Heart right ventricle (tissue), 16 donors: ENCODE measurements at regions of chr13 and their contacts with region 1.

Region 1: GRCh38 chr13:105219651-105220050 is 1315.8 kb downstream of the EFNB2 start:
- DNase-seq: no peak
- ATAC-seq: no peak
- H3K4me3 ChIP-seq: no peak overlapping the region
- H3K27ac ChIP-seq: no peak overlapping the region
- H3K4me1 ChIP-seq: no peaks in the 10 kb centered on the region
- H3K27me3 ChIP-seq: no peaks in the 10 kb centered on the region
- CTCF ChIP-seq: no peak

Region 2: GRCh38 chr13:104975272-104975671 is 244.4 kb before region 1 on chr13:
- intact Hi-C with region 1: loop called in 1 of 10 experiments (anchors 10 kb)
- DNase-seq: no peak
- ATAC-seq: no peak
- H3K4me3 ChIP-seq: no peak overlapping the region
- H3K27ac ChIP-seq: no peak overlapping the region
- H3K4me1 ChIP-seq: no peaks in the 10 kb centered on the region
- H3K27me3 ChIP-seq: no peaks in the 10 kb centered on the region
- CTCF ChIP-seq: no peak

Region 3: GRCh38 chr13:105327581-105328126 is 108.0 kb after region 1 on chr13:
- intact Hi-C with region 1: no loop called
- DNase-seq: no peak
- ATAC-seq: no peak
- H3K4me3 ChIP-seq: no peak overlapping the region
- H3K27ac ChIP-seq: no peak overlapping the region
- H3K4me1 ChIP-seq: no peaks in the 10 kb centered on the region
- H3K27me3 ChIP-seq: no peaks in the 10 kb centered on the region
- CTCF ChIP-seq: no peak